ENCODE measurements at regions of chr6 and their contacts with region 1.

Region 1: DNA sequence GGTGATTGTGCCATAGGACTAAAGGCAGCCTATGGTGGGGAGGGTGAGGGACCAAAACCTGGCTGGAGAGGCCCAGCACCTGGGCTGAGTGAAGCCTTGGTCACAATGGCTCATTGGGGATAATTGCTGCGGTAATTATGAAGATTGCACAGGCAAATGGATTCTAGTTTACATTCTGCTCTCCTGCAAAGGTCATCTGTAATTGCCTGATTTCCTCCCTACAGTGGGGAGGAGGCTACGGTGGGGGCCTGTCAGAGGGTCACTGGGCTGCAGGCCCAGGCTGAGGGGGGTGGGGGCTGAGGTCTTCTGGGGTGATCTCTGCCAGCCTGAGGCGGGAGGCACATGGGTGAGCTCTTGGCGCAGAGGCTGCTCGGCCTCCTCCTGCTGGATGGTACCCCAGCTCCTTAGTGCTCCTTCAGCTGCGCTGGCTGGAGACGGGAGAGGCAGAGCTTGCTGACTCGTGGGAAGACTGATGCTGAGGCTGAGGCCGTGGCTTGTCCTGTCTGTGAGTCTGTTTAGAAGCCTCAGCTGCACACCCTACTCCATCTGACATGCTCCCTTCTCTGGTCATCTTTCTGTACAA is 30.3 kb downstream of the PACSIN1 start:
- DNase-seq: no peak
- H3K4me3 ChIP-seq: no peak overlapping the region
- H3K27ac ChIP-seq: no peak overlapping the region
- H3K27me3 ChIP-seq: peaks cover 2% of the 10 kb centered on the region
- CTCF ChIP-seq: no peak

Region 2: GRCh38 chr6:34513646-34514045 is 17.5 kb after region 1 on chr6:
- CTCF ChIA-PET with region 1: interaction called, 3 read pairs
- POLR2A ChIA-PET with region 1: interaction called, 10 read pairs
- DNase-seq: no peak
- H3K4me3 ChIP-seq: no peak overlapping the region
- H3K27ac ChIP-seq: no peak overlapping the region
- H3K27me3 ChIP-seq: peaks cover 45% of the 10 kb centered on the region
- CTCF ChIP-seq: no peak

Region 3: DNA sequence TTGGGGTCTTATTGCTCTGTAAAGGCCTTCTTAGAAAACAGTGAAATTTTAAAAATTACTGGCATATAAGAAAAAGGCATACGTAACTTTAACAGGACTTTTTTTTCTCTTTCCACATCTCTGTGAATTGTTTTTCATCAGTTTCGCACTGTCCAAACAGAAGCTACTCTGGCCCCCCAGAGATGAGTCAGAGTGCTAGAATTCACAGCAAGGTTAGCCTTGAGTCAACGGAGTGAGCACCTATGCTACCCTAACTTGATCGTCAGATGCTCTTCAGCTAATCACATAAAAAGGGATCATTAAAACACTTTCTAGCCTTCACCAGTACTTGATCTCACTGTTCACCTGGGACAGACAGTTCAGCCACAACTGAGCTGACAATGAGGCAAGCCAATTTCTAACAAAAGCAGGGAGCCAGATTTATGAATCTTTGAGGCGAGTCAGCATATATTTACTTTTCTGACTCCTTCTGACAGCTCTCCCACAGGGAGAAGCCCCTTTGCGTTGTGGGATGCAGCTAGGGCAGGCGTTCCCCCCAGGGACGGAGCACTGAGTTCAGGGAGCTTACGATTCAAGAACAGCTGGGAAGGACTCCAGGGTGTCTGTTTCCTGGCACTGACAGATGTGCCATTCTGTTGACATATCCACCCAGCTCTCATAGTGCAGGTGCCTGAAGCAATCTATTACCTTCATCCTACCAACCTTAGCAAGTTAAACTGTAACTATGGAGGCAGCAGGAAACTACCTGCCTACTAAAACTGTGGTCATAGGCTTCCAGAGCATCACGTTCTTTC is 106.3 kb after region 1 on chr6:
- CTCF ChIA-PET with region 1: no interaction called
- POLR2A ChIA-PET with region 1: no interaction called
- DNase-seq: no peak
- H3K4me3 ChIP-seq: no peak overlapping the region
- H3K27ac ChIP-seq: no peak overlapping the region
- H3K27me3 ChIP-seq: no peaks in the 10 kb centered on the region
- CTCF ChIP-seq: no peak

Measured in AG04450 (cell line).